ENCODE measurements at regions of chr17 and their contacts with region 1.

Region 1: GRCh38 chr17:54494721-54495715 is 405.6 kb upstream of the TOM1L1 start:
- DNase-seq: no peak
- ATAC-seq: peak; percentile 52
- H3K4me3 ChIP-seq: no peak overlapping the region
- H3K27ac ChIP-seq: no peak overlapping the region
- H3K4me1 ChIP-seq: no peaks in the 10 kb centered on the region
- H3K27me3 ChIP-seq: no peaks in the 10 kb centered on the region
- CTCF ChIP-seq: no peak
- EP300 ChIP-seq: no peak
- POLR2A ChIP-seq: no peak
- RAD21 ChIP-seq: no peak

Region 2: DNA sequence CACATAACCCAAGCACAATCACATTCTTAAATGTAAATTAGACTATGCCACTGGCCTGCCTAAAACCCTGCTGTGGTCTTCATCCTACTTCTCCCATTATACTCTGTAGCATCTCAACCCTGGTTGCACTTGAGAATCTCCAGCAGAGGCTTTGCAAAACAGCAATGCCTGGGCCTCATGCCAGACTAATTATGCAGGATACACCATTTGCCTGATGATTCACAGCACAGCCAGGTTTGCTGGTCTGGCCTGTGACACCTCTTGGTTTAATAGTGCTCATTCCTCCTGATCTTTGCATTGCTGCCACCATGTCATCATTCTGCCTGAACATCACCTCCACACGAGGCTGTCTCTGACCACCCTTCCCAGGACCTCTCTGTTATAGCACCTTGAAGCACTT is 86.3 kb before region 1 on chr17:
- CTCF ChIA-PET with region 1: no interaction called
- POLR2A ChIA-PET with region 1: no interaction called
- RAD21 ChIA-PET with region 1: no interaction called
- SMC1A ChIA-PET with region 1: no interaction called
- in situ Hi-C with region 1: no loop called
- intact Hi-C with region 1: no loop called
- DNase-seq: no peak
- ATAC-seq: no peak
- H3K4me3 ChIP-seq: no peak overlapping the region
- H3K27ac ChIP-seq: no peak overlapping the region
- H3K4me1 ChIP-seq: no peaks in the 10 kb centered on the region
- H3K27me3 ChIP-seq: no peaks in the 10 kb centered on the region
- CTCF ChIP-seq: no peak
- EP300 ChIP-seq: no peak
- POLR2A ChIP-seq: no peak
- RAD21 ChIP-seq: no peak

Region 3: GRCh38 chr17:54426296-54426886 is 68.6 kb before region 1 on chr17:
- CTCF ChIA-PET with region 1: interaction called, 10 read pairs
- POLR2A ChIA-PET with region 1: no interaction called
- RAD21 ChIA-PET with region 1: interaction called, 15 read pairs
- SMC1A ChIA-PET with region 1: interaction called, 24 read pairs
- in situ Hi-C with region 1: no loop called
- intact Hi-C with region 1: no loop called
- DNase-seq: no peak
- ATAC-seq: no peak
- H3K4me3 ChIP-seq: no peak overlapping the region
- H3K27ac ChIP-seq: no peak overlapping the region
- H3K4me1 ChIP-seq: no peaks in the 10 kb centered on the region
- H3K27me3 ChIP-seq: no peaks in the 10 kb centered on the region
- CTCF ChIP-seq: peak; percentile 13 to 33 (median 20); a peak in 2 of 6 replicates
- EP300 ChIP-seq: no peak
- POLR2A ChIP-seq: no peak
- RAD21 ChIP-seq: peak; percentile 38

Region 4: DNA sequence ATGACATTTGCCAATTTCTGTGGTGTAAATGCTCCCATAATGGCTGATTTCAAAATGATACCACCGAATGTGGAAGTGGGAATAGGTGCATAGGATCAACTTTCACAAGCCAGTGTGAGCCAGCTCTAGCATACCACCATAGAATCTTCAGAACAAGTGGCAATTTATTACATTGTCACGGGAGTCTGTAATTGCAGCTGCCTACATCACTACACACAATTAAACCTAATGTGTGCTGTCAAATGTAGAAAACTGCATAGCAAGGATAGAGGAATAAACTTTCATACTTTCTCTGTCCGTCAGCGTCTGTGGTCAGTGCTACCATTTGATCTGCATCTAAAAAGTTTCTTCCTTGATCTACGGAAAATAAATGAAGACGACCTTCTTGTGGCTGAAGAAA is 12.2 kb before region 1 on chr17:
- CTCF ChIA-PET with region 1: interaction called, 10 read pairs
- POLR2A ChIA-PET with region 1: interaction called, 6 read pairs
- RAD21 ChIA-PET with region 1: interaction called, 38 read pairs
- SMC1A ChIA-PET with region 1: interaction called, 119 read pairs
- in situ Hi-C with region 1: no loop called
- intact Hi-C with region 1: no loop called
- DNase-seq: no peak
- ATAC-seq: no peak
- H3K4me3 ChIP-seq: no peak overlapping the region
- H3K27ac ChIP-seq: no peak overlapping the region
- H3K4me1 ChIP-seq: no peaks in the 10 kb centered on the region
- H3K27me3 ChIP-seq: no peaks in the 10 kb centered on the region
- CTCF ChIP-seq: no peak
- EP300 ChIP-seq: no peak
- POLR2A ChIP-seq: no peak
- RAD21 ChIP-seq: no peak

Region 5: DNA sequence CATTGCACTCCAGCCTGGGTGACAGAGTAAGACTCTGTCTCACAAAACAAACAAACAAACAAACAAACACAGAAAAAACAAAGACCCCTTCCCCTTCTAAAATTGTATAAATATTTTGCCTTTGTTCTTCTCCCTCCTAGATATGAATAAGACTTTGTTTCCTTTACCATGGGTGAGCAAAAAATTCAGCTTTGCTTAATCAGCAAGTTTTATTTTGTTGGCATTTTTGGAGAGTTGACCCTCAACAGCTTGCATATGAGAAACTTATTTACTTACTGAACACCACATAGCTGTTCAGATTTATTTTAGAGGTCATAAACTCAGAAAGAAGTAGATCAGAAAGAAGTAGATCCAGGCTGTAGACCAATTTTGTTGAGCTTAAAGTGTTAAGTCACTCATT is 10.4 kb after region 1 on chr17:
- CTCF ChIA-PET with region 1: interaction called, 11 read pairs
- POLR2A ChIA-PET with region 1: interaction called, 3 read pairs
- RAD21 ChIA-PET with region 1: interaction called, 5 read pairs
- SMC1A ChIA-PET with region 1: interaction called, 8 read pairs
- in situ Hi-C with region 1: no loop called
- intact Hi-C with region 1: no loop called
- DNase-seq: no peak
- ATAC-seq: no peak
- H3K4me3 ChIP-seq: no peak overlapping the region
- H3K27ac ChIP-seq: no peak overlapping the region
- H3K4me1 ChIP-seq: no peaks in the 10 kb centered on the region
- H3K27me3 ChIP-seq: no peaks in the 10 kb centered on the region
- CTCF ChIP-seq: no peak
- EP300 ChIP-seq: no peak
- POLR2A ChIP-seq: no peak
- RAD21 ChIP-seq: no peak

Region 6: DNA sequence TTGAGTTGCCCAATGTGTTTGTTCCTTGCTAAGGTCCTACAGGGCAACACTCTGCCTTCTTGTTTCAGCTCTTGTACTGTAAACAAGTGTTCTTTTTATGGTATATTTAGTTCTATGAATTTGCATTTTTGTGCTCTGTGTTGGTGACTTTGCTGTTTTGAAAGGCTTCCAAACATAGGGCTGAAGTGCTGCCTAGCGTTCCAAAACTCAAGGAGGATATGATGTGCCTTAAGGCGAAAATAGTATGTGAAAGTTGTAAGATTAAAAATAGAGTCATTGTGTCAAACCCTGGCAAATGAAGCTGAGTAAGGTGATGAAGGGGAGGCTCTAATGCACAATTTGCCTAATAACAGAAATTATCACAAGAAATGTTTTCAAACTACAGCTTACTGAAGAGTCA is 32.9 kb after region 1 on chr17:
- CTCF ChIA-PET with region 1: interaction called, 5 read pairs
- POLR2A ChIA-PET with region 1: interaction called, 4 read pairs
- RAD21 ChIA-PET with region 1: interaction called, 24 read pairs
- SMC1A ChIA-PET with region 1: interaction called, 27 read pairs
- in situ Hi-C with region 1: no loop called
- intact Hi-C with region 1: no loop called
- DNase-seq: no peak
- ATAC-seq: no peak
- H3K4me3 ChIP-seq: no peak overlapping the region
- H3K27ac ChIP-seq: no peak overlapping the region
- H3K4me1 ChIP-seq: no peaks in the 10 kb centered on the region
- H3K27me3 ChIP-seq: no peaks in the 10 kb centered on the region
- CTCF ChIP-seq: no peak
- EP300 ChIP-seq: no peak
- POLR2A ChIP-seq: no peak
- RAD21 ChIP-seq: no peak

Region 7: DNA sequence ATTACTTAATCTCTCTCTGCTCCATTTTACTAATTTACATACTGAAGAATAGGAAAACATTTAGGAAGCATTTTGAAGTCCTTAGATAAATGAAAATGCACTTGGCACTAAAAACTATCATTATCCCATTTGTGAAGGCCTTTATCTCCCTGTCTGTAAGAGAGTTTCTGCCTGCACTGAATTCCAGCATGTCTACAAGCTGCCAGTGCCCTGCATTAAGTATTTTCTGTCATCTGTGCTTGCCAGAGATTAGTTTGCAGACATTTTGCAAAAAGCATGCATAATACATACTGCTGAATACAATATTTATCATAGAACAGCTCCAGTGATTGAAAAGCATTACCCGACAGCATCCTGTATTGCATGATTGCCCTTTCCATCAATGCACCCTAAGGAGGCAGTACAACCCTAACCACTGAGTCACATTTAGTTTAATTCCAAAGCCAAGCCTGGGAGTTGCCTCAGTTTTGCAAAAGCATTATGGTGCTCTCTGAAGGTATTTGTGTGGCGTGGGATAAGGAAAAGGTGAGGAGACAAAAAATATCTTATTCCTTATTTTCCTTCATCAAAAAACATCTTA is 125.5 kb after region 1 on chr17:
- CTCF ChIA-PET with region 1: no interaction called
- POLR2A ChIA-PET with region 1: no interaction called
- RAD21 ChIA-PET with region 1: no interaction called
- SMC1A ChIA-PET with region 1: no interaction called
- in situ Hi-C with region 1: no loop called
- intact Hi-C with region 1: no loop called
- DNase-seq: no peak
- ATAC-seq: no peak
- H3K4me3 ChIP-seq: no peak overlapping the region
- H3K27ac ChIP-seq: no peak overlapping the region
- H3K4me1 ChIP-seq: no peaks in the 10 kb centered on the region
- H3K27me3 ChIP-seq: no peaks in the 10 kb centered on the region
- CTCF ChIP-seq: no peak
- EP300 ChIP-seq: no peak
- POLR2A ChIP-seq: no peak
- RAD21 ChIP-seq: no peak